Activated CD4-positive, alpha-beta T cell treated with anti-CD3 and anti-CD28 coated beads for 36 hours (primary cell): ENCODE measurements at regions of chr3 and their contacts with region 1.

Region 1: GRCh38 chr3:8987645-8988383 is 24.5 kb upstream of the RAD18 start:
- DNase-seq: peak; percentile 81
- ATAC-seq: peak; percentile 96
- H3K4me3 Mint-ChIP-seq: no peak overlapping the region
- H3K27ac Mint-ChIP-seq: no peak overlapping the region
- H3K4me1 Mint-ChIP-seq: no peaks in the 10 kb centered on the region
- H3K27me3 Mint-ChIP-seq: no peaks in the 10 kb centered on the region

Region 2: GRCh38 chr3:8970971-8971589 is 16.7 kb before region 1 on chr3:
- CTCF ChIA-PET with region 1: interaction called, 19 read pairs
- POLR2A ChIA-PET with region 1: no interaction called
- intact Hi-C with region 1: no loop called
- DNase-seq: peak; percentile 81
- ATAC-seq: peak; percentile 80
- H3K4me3 Mint-ChIP-seq: no peak overlapping the region
- H3K27ac Mint-ChIP-seq: no peak overlapping the region
- H3K4me1 Mint-ChIP-seq: peaks cover 2% of the 10 kb centered on the region
- H3K27me3 Mint-ChIP-seq: peaks cover 4% of the 10 kb centered on the region

Region 3: GRCh38 chr3:9012521-9012920 is 24.7 kb after region 1 on chr3:
- CTCF ChIA-PET with region 1: interaction called, 13 read pairs
- POLR2A ChIA-PET with region 1: no interaction called
- intact Hi-C with region 1: no loop called
- DNase-seq: peak; percentile 10
- ATAC-seq: peak; percentile 82
- H3K4me3 Mint-ChIP-seq: no peak overlapping the region
- H3K27ac Mint-ChIP-seq: no peak overlapping the region
- H3K4me1 Mint-ChIP-seq: peaks cover 14% of the 10 kb centered on the region
- H3K27me3 Mint-ChIP-seq: no peaks in the 10 kb centered on the region

Region 4: GRCh38 chr3:9067352-9067975 is 79.7 kb after region 1 on chr3:
- CTCF ChIA-PET with region 1: interaction called, 9 read pairs
- POLR2A ChIA-PET with region 1: no interaction called
- intact Hi-C with region 1: loop called (anchors 1 to 5 kb)
- DNase-seq: peak; percentile 56
- ATAC-seq: peak; percentile 63
- H3K4me3 Mint-ChIP-seq: no peak overlapping the region
- H3K27ac Mint-ChIP-seq: no peak overlapping the region
- H3K4me1 Mint-ChIP-seq: no peaks in the 10 kb centered on the region
- H3K27me3 Mint-ChIP-seq: no peaks in the 10 kb centered on the region

Region 5: GRCh38 chr3:9241956-9242355 is 254.1 kb after region 1 on chr3:
- CTCF ChIA-PET with region 1: no interaction called
- POLR2A ChIA-PET with region 1: no interaction called
- intact Hi-C with region 1: no loop called
- DNase-seq: no peak
- ATAC-seq: no peak
- H3K4me3 Mint-ChIP-seq: no peak overlapping the region
- H3K27ac Mint-ChIP-seq: no peak overlapping the region
- H3K4me1 Mint-ChIP-seq: no peaks in the 10 kb centered on the region
- H3K27me3 Mint-ChIP-seq: no peaks in the 10 kb centered on the region